ENCODE measurements at regions of chr14 and their contacts with region 1.

Region 1: GRCh38 chr14:99628832-99629618 is 15.9 kb upstream of the HHIPL1 start:
- DNase-seq: peak; percentile 80 to 92 (median 84)
- H3K4me3 ChIP-seq: no peak overlapping the region
- H3K27ac ChIP-seq: no peak overlapping the region
- H3K4me1 ChIP-seq: peaks cover 0 to 2% (median 0%) of the 10 kb centered on the region in 3 donors
- H3K27me3 ChIP-seq: no peaks in the 10 kb centered on the region
- CTCF ChIP-seq: peak; percentile 90

Region 2: DNA sequence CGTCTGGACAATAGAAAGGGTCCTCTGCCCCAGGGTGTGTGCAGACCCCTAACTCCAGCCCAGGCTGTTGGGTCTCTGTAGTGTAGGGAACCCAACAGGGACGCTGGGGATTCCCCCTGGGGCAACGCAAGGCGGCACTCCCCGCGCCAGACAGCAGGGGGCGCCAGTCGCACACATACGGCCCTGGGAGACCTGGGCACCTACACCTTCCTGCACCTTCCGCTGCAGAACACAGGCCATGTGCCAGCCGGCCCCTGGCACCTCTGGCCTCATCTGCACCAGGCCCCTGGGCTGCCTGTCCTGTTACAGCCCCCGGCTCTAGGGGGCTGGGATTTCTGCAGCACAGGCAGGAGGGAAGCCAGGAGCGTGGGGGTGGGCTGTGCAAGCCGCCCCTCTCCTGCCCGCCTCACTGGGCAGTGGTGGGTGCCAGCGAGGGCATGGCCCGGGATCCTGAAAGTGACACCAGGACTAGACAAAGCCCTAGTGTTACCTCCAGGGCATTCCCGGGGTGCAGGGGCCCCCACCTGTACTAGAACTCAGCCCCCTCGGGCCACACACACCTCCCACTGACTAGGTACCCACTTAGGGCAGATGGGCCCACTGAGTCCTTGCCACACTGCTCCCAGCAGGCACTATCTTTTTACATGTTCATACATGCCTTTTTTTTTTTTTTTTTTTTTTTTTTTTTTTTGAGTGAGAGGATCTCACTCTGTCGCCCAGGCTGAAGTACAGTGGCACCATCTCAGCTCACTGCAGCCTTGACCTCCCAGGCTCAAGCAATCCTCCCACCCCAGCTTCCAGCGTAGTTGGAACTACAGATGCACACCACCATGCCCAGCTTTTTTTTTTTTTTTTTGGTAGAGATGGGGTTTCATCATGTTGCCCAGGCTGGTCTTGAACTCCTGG is 110.3 kb before region 1 on chr14:
- intact Hi-C with region 1: loop called (anchors 5 kb)
- DNase-seq: peak; percentile 71 to 91 (median 85)
- H3K4me3 ChIP-seq: no peak overlapping the region
- H3K27ac ChIP-seq: no peak overlapping the region
- H3K4me1 ChIP-seq: no peaks in the 10 kb centered on the region
- H3K27me3 ChIP-seq: no peaks in the 10 kb centered on the region
- CTCF ChIP-seq: peak; percentile 96